MCF 10A (cell line): ENCODE measurements at regions of chr9 and their contacts with region 1.

Region 1: DNA sequence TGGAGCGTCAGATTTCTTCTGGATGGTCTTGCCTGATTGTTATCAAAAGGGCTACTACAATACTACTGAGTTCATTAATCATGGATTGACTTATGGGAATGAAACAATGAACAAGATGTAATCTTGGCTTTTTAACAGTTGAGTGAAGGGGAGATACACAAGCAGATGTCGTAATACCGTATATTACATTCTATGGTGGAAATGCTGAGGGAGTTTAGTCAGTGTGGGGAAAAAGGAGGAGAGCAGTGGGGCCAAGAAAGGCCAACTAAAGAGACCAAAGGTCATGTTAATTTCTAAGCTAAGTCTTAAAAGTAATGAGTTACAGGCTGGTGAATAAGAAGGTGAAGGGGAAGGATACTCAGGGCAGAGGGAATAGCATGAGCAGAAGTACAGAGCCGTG is 29.0 kb upstream of the PSAT1 start:
- DNase-seq: no peak
- H3K4me3 Mint-ChIP-seq: no peak overlapping the region
- H3K27ac Mint-ChIP-seq: peak overlapping the region; percentile 57
- H3K4me1 Mint-ChIP-seq: no peaks in the 10 kb centered on the region
- H3K27me3 Mint-ChIP-seq: no peaks in the 10 kb centered on the region
- CTCF ChIP-seq: no peak

Region 2: GRCh38 chr9:78280982-78281668 is 13.2 kb after region 1 on chr9:
- CTCF ChIA-PET with region 1: interaction called, 14 read pairs
- POLR2A ChIA-PET with region 1: interaction called, 9 read pairs
- intact Hi-C with region 1: no loop called
- DNase-seq: peak; percentile 62
- H3K4me3 Mint-ChIP-seq: no peak overlapping the region
- H3K27ac Mint-ChIP-seq: peak overlapping the region; percentile 49
- H3K4me1 Mint-ChIP-seq: peaks cover 20% of the 10 kb centered on the region
- H3K27me3 Mint-ChIP-seq: no peaks in the 10 kb centered on the region
- CTCF ChIP-seq: no peak